ENCODE measurements at regions of chr9 and their contacts with region 1.

Region 1: GRCh38 chr9:97696803-97697601 is at the start of gene XPA:
- DNase-seq: peak; percentile 96 to 97 (median 96)
- H3K4me3 ChIP-seq: peak within 1 kb of the TSS; percentile 4 to 82
- H3K4me3 Mint-ChIP-seq: peak within 1 kb of the TSS; percentile 86 to 96 (median 92)
- H3K27ac ChIP-seq: peak within 1 kb of the TSS; percentile 68
- H3K27ac Mint-ChIP-seq: peak within 1 kb of the TSS; percentile 86 to 98 (median 96)
- H3K4me1 ChIP-seq: peaks cover 44% of the 10 kb centered on the region
- H3K4me1 Mint-ChIP-seq: peaks cover 41 to 56% (median 49%) of the 10 kb centered on the region in 4 donors
- H3K27me3 ChIP-seq: no peaks in the 10 kb centered on the region
- H3K27me3 Mint-ChIP-seq: no peaks in the 10 kb centered on the region
- total RNA-seq, gene XPA: 24.0 to 25.5 TPM

Region 2: DNA sequence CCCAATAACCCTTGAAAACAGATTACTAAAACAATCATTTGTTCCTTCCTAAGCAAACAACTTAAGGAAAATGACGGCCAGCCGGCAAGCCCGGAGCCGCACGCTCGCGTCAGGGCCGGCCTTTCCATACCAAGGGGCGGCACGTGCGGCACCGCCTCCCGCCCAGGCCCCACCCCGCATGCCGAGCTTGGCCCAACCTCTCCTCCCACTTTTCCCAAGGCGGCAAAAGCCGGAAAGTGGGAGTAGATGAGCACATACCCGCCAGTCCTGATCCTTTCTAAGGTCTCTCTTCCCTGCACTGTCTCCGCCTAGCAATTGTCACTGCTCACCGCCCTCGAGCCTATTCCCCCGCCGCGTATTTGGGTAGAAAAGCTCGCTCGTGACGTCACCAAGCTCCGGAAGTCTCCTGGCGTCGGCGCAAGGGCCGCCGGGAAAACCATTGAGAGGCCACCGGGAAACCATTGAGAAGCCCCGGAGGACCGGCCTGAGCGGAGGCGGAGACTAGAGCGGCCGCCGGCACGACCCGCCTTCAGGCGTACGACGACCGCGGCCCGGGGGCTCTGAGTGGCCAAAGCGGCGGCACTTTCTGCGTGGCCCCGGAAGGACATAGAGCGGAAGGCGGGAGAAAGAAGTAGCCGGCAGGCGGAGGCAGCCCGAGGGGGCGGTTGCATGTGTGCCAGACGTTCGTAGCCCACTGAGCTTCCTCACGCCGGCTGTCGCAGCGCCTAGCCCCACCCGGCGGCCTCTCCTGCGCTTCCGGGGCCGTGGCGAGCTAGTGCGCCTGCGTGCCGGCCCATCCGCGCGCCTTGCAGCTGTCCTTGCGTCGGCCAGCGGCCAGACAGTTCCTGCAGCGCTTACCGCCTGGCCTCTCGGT is 63.8 kb before region 1 on chr9 and contains the starts of genes NCBP1 and TSTD2:
- CTCF ChIA-PET with region 1: no interaction called
- POLR2A ChIA-PET with region 1: interaction called, 49 read pairs
- intact Hi-C with region 1: loop called (anchors 1 kb)
- DNase-seq: peak; percentile 96 to 97 (median 97)
- H3K4me3 ChIP-seq: peak within 1 kb of the TSS; percentile 80 to 87
- H3K4me3 Mint-ChIP-seq: peak within 1 kb of the TSS; percentile 96 to 100 (median 98)
- H3K27ac ChIP-seq: peak within 1 kb of the TSS; percentile 92
- H3K27ac Mint-ChIP-seq: peak within 1 kb of the TSS; percentile 96 to 100 (median 100)
- H3K4me1 ChIP-seq: peaks cover 52% of the 10 kb centered on the region
- H3K4me1 Mint-ChIP-seq: peaks cover 37 to 65% (median 51%) of the 10 kb centered on the region in 4 donors
- H3K27me3 ChIP-seq: no peaks in the 10 kb centered on the region
- H3K27me3 Mint-ChIP-seq: no peaks in the 10 kb centered on the region
- total RNA-seq, gene NCBP1: 40.7 to 50.8 TPM
- total RNA-seq, gene TSTD2: 17.8 to 18.4 TPM

Region 3: GRCh38 chr9:97737429-97737828 is 40.4 kb after region 1 on chr9:
- CTCF ChIA-PET with region 1: no interaction called
- POLR2A ChIA-PET with region 1: no interaction called
- intact Hi-C with region 1: no loop called
- DNase-seq: no peak
- H3K4me3 ChIP-seq: no peak overlapping the region
- H3K4me3 Mint-ChIP-seq: no peak overlapping the region
- H3K27ac ChIP-seq: no peak overlapping the region
- H3K27ac Mint-ChIP-seq: no peak overlapping the region
- H3K4me1 ChIP-seq: peaks cover 11% of the 10 kb centered on the region
- H3K4me1 Mint-ChIP-seq: peaks cover 1 to 11% (median 7%) of the 10 kb centered on the region in 4 donors
- H3K27me3 ChIP-seq: peaks cover 20% of the 10 kb centered on the region
- H3K27me3 Mint-ChIP-seq: peaks cover 19 to 34% of the 10 kb centered on the region in 2 donors